Panc1 (cell line): ENCODE measurements at regions of chr6 and their contacts with region 1.

Region 1: GRCh38 chr6:41683510-41684310 is 45.4 kb downstream of the MDFI start:
- DNase-seq: peak; percentile 12
- ATAC-seq: peak; percentile 90
- H3K4me3 ChIP-seq: no peak overlapping the region
- H3K27ac ChIP-seq: no peak overlapping the region
- H3K4me1 ChIP-seq: no peaks in the 10 kb centered on the region; the same call in none of the 2 replicates
- H3K27me3 ChIP-seq: no peaks in the 10 kb centered on the region
- CTCF ChIP-seq: peak; percentile 96

Region 2: GRCh38 chr6:41306187-41306854 is 377.4 kb before region 1 on chr6:
- CTCF ChIA-PET with region 1: interaction called, 6 read pairs
- POLR2A ChIA-PET with region 1: no interaction called
- in situ Hi-C with region 1: no loop called
- intact Hi-C with region 1: loop called (anchors 2 kb)
- DNase-seq: peak; percentile 42
- ATAC-seq: peak; percentile 74; the same call in 1 of the 2 replicates
- H3K4me3 ChIP-seq: no peak overlapping the region
- H3K27ac ChIP-seq: no peak overlapping the region
- H3K4me1 ChIP-seq: no peaks in the 10 kb centered on the region
- H3K27me3 ChIP-seq: peaks cover 24% of the 10 kb centered on the region
- CTCF ChIP-seq: peak; percentile 81

Region 3: DNA sequence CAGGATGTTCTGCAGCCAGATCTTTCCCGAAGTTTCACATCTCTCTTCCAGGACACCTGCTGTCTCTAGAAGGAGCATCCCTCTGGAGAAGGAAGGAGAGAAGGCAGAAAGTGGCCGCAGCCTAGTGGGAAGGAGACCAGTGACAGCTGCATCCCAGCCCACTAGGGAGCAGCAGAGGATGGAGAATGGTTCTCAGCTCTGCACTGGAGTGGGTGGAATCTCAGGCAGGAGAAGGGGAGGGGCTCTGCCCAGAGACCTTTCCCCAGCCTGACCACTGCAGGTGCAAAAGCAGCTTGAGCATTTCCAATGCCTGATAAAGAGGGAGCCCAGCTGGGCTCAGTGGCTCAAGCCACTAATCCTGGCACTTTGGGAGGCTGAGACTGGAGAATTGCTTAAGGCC is 316.0 kb before region 1 on chr6:
- CTCF ChIA-PET with region 1: interaction called, 4 read pairs
- POLR2A ChIA-PET with region 1: no interaction called
- in situ Hi-C with region 1: no loop called
- intact Hi-C with region 1: loop called (anchors 2 kb)
- DNase-seq: no peak
- ATAC-seq: peak; percentile 84
- H3K4me3 ChIP-seq: no peak overlapping the region
- H3K27ac ChIP-seq: no peak overlapping the region
- H3K4me1 ChIP-seq: 0 out of 2 replicates have a peak, but pooled peaks cover 5% of the 10 kb centered on the region
- H3K27me3 ChIP-seq: peaks cover 8% of the 10 kb centered on the region
- CTCF ChIP-seq: peak; percentile 79

Region 4: DNA sequence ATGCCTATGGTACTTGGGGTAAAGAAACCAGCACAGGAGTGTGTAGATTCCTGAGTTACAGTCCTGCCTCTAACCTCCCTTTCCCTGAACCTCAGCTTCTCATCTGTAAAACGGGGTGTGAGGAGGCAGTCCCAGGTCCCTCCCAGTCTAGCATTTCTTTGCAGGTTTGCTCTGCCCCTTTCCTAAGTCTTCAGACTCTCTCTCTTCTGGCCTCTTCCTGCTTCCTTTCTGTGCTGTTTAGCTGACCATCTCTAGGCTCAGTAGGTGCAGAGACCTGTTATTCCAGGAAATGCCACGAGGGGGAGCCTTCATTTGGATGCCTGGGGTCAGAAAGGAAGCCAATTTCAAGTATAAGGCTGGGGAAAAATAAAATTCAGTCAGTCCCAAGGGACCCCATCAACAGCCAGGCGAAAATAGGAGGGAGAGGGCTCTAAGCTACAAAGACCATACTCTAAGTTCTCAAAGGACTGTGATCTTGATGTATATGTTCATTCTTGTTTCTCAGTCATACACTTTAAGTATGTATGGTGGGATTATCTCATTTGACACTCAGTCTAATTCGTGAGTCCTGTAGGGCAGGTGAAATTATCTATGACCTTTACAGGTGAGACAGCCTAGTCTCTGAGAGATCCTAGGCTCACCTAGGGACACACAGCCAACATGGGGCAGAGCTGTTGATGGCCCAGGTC is 259.2 kb before region 1 on chr6:
- CTCF ChIA-PET with region 1: no interaction called
- POLR2A ChIA-PET with region 1: no interaction called
- in situ Hi-C with region 1: no loop called
- intact Hi-C with region 1: loop called (anchors 10 kb)
- DNase-seq: peak; percentile 53
- ATAC-seq: peak; percentile 79
- H3K4me3 ChIP-seq: no peak overlapping the region
- H3K27ac ChIP-seq: no peak overlapping the region
- H3K4me1 ChIP-seq: peaks cover 17% of the 10 kb centered on the region
- H3K27me3 ChIP-seq: peaks cover 15% of the 10 kb centered on the region
- CTCF ChIP-seq: peak; percentile 90

Region 5: DNA sequence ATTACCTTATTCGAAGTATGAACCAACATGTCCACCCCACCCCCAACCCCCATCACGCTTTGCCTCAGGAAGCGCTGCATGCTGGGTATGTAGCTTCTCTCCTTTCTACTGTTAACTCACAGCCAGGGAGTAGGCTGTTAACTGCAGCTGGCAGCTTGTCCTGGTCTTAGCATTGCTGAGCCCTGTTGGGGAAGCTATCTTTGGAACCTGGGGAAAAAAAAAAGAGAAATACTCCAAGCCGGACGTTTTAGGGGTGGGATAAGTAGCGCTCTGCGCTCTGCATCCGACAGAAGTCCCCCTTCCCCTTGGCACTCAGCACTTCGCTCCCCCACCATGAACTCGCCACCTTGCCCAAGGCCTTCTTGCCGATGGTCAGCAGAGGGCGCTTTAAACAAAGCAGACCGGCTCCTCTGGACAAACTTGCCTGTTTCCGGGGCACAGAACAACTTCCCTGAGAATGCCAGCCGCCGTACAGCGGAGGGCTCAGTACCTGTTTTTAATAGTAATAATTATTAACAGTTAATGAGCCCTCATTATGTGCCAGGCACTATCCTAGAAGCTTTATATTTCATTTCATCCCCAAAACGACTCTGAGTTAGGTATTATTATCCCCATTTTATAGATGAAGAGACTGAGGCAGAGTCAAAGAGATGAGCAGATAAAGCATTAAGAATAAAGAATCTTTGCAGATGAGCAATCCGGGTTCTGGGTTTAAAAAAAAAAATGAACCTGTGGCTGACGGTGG is 80.7 kb before region 1 on chr6:
- CTCF ChIA-PET with region 1: interaction called, 30 read pairs
- POLR2A ChIA-PET with region 1: no interaction called
- in situ Hi-C with region 1: no loop called
- intact Hi-C with region 1: loop called (anchors 1 kb)
- DNase-seq: peak; percentile 70
- ATAC-seq: peak; percentile 83
- H3K4me3 ChIP-seq: peak overlapping the region; percentile 1 to 43; a peak in 2 of 4 replicates
- H3K27ac ChIP-seq: peak overlapping the region; percentile 12; the same call in 1 of the 2 replicates
- H3K4me1 ChIP-seq: peaks cover 10% of the 10 kb centered on the region
- H3K27me3 ChIP-seq: no peaks in the 10 kb centered on the region
- CTCF ChIP-seq: peak; percentile 93

Region 6: DNA sequence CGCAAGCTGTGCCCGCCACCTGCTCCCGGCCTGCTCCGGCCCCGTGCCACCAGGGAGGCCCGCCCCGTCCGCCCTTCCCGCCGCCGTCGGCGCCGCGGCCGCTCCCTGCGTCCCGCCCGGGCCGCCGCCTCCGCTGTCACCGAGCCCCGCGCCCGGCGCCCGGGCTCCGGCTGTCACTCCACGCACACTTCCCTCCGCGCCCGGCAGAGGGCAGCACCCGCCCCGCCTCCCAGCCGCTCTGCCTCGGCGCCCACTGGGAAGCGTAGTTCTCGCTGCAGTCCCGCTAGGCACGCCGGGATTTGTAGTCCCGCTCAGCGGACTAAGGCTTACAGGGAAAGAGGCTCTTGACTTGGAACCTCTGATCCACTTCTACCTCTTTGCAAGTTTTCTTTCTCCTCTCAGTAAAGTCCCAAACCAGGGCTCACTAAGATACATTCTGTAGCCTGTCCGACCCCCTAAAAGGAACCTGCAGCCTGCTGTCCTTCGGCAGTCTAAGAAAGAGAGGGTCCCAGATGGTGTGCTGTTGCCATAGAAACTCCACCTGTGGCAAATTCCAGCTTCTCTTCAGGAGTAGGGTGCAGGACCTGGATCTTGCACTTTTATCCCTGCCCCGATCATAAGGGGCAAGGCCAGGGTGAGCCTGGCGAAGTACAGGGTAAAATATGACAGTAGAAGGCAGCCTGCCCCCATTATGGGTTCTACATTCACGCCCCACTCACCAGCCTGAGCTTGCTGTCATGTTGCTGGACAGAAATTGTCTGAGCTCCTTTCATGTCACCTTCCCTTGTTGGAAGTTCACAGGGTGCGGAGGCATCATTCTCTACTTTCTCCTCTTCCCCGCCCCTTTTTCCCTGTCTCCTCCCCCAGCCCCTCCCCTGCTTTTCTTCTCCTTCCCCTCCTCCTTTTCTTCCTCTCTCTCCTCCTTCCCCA is 52.0 kb after region 1 on chr6 and contains the start of gene TFEB:
- CTCF ChIA-PET with region 1: interaction called, 3 read pairs
- POLR2A ChIA-PET with region 1: interaction called, 12 read pairs
- in situ Hi-C with region 1: no loop called
- intact Hi-C with region 1: no loop called
- DNase-seq: peak; percentile 65
- ATAC-seq: peak; percentile 78
- H3K4me3 ChIP-seq: peak within 1 kb of the TSS; percentile 64 to 86
- H3K27ac ChIP-seq: no peak within 1 kb of the TSS
- H3K4me1 ChIP-seq: peaks cover 14% of the 10 kb centered on the region
- H3K27me3 ChIP-seq: no peaks in the 10 kb centered on the region
- CTCF ChIP-seq: peak; percentile 99
- total RNA-seq, gene TFEB: 13.3 TPM

Region 7: GRCh38 chr6:43185391-43185790 is 1501.7 kb after region 1 on chr6:
- CTCF ChIA-PET with region 1: no interaction called
- POLR2A ChIA-PET with region 1: no interaction called
- in situ Hi-C with region 1: no loop called
- intact Hi-C with region 1: no loop called
- DNase-seq: no peak
- ATAC-seq: no peak
- H3K4me3 ChIP-seq: no peak overlapping the region
- H3K27ac ChIP-seq: no peak overlapping the region
- H3K4me1 ChIP-seq: peaks cover 19% of the 10 kb centered on the region
- H3K27me3 ChIP-seq: no peaks in the 10 kb centered on the region
- CTCF ChIP-seq: no peak